MCF 10A (cell line): ENCODE measurements at regions of chr11 and their contacts with region 1.

Region 1: DNA sequence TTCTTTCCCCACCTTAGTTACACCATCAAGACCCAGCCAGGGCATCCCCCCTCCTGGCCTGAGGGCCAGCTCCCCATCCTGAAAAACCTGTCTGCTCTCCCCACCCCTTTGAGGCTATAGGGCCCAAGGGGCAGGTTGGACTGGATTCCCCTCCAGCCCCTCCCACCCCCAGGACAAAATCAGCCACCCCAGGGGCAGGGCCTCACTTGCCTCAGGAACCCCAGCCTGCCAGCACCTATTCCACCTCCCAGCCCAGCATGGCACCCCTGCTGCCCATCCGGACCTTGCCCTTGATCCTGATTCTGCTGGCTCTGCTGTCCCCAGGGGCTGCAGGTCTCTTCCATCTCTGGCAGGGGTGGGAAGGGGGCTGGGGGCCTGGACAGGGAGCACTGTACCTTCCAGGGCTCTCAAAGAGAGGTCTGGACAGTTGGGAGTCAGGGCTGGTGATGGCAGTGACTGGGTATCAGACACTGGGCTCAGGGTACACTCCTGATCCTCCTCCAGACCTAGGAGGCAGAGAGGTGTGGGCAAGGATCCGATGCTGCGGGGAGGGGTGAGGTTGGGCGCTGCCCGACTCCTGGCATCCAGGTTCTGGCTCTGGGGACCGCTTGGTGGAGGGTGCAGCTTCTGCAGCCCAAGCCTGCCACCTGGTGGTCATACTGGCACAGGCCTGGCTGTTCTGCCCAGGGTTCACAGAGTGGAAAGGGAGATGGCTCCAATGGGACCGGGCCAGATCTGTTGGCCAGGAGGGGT is at the start of gene UPK2:
- DNase-seq: peak; percentile 84
- H3K4me3 Mint-ChIP-seq: no peak within 1 kb of the TSS
- H3K27ac Mint-ChIP-seq: peak within 1 kb of the TSS; percentile 47
- H3K4me1 Mint-ChIP-seq: peaks cover 8% of the 10 kb centered on the region
- H3K27me3 Mint-ChIP-seq: peaks cover 12% of the 10 kb centered on the region
- CTCF ChIP-seq: peak; percentile 89
- total RNA-seq, gene UPK2: not detected in 2 replicates

Region 2: GRCh38 chr11:118610804-118611795 is 345.2 kb before region 1 on chr11:
- CTCF ChIA-PET with region 1: no interaction called
- POLR2A ChIA-PET with region 1: interaction called, 3 read pairs
- intact Hi-C with region 1: loop called (anchors 5 kb)
- DNase-seq: peak; percentile 58
- H3K4me3 Mint-ChIP-seq: no peak overlapping the region
- H3K27ac Mint-ChIP-seq: no peak overlapping the region
- H3K4me1 Mint-ChIP-seq: peaks cover 20% of the 10 kb centered on the region
- H3K27me3 Mint-ChIP-seq: no peaks in the 10 kb centered on the region
- CTCF ChIP-seq: peak; percentile 84

Region 3: GRCh38 chr11:118659314-118659952 is 296.8 kb before region 1 on chr11:
- CTCF ChIA-PET with region 1: interaction called, 4 read pairs
- POLR2A ChIA-PET with region 1: no interaction called
- intact Hi-C with region 1: loop called (anchors 1 kb)
- DNase-seq: peak; percentile 84
- H3K4me3 Mint-ChIP-seq: no peak overlapping the region
- H3K27ac Mint-ChIP-seq: no peak overlapping the region
- H3K4me1 Mint-ChIP-seq: no peaks in the 10 kb centered on the region
- H3K27me3 Mint-ChIP-seq: no peaks in the 10 kb centered on the region
- CTCF ChIP-seq: peak; percentile 96

Region 4: GRCh38 chr11:118856314-118856713 is 100.0 kb before region 1 on chr11:
- CTCF ChIA-PET with region 1: no interaction called
- POLR2A ChIA-PET with region 1: no interaction called
- intact Hi-C with region 1: no loop called
- DNase-seq: no peak
- H3K4me3 Mint-ChIP-seq: no peak overlapping the region
- H3K27ac Mint-ChIP-seq: no peak overlapping the region
- H3K4me1 Mint-ChIP-seq: no peaks in the 10 kb centered on the region
- H3K27me3 Mint-ChIP-seq: no peaks in the 10 kb centered on the region
- CTCF ChIP-seq: no peak

Region 5: GRCh38 chr11:118907051-118908042 is 48.9 kb before region 1 on chr11:
- CTCF ChIA-PET with region 1: interaction called, 5 read pairs
- POLR2A ChIA-PET with region 1: no interaction called
- intact Hi-C with region 1: loop called (anchors 1 kb)
- DNase-seq: peak; percentile 85
- H3K4me3 Mint-ChIP-seq: peak overlapping the region; percentile 33
- H3K27ac Mint-ChIP-seq: no peak overlapping the region
- H3K4me1 Mint-ChIP-seq: peaks cover 47% of the 10 kb centered on the region
- H3K27me3 Mint-ChIP-seq: no peaks in the 10 kb centered on the region
- CTCF ChIP-seq: peak; percentile 94

Region 6: DNA sequence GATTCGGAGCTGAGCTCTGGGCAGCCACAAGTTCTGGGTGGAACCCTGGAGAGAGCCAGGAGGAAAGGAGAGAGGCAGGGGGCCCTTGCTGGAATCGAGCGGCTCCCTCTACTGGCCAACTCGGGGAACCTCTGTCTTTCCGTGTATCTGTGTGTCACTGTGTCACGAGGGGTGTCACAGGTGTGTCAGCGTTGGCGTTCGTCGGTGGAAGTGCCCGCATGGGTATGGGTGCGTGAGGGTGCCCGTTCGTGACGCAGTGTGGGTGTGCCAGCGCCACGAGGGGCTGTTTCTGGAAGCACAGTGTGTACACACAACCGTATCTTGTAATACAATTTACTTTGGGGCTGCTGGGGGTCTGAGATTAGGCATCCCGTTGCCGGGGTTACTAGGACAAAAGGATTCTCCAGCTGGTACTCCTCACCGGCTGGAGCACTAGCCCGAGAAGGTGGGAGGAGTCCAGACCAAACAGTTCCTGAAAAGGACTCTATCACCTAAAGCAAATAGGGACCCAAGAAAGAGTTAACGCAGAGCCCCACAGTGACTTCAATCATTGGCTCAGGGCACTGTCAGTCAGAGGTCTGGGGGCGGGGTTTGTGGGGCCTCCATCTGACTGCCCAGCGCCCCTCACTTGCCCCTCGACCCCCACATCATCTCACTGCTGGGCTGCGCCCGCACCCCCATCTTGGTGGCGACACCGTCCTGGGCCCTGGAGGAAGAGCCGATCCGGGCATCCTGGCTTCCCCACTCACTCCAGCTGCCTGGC is 28.0 kb before region 1 on chr11:
- CTCF ChIA-PET with region 1: interaction called, 14 read pairs
- POLR2A ChIA-PET with region 1: interaction called, 4 read pairs
- intact Hi-C with region 1: loop called (anchors 2 kb)
- DNase-seq: peak; percentile 95
- H3K4me3 Mint-ChIP-seq: peak overlapping the region; percentile 84
- H3K27ac Mint-ChIP-seq: peak overlapping the region; percentile 84
- H3K4me1 Mint-ChIP-seq: peaks cover 31% of the 10 kb centered on the region
- H3K27me3 Mint-ChIP-seq: no peaks in the 10 kb centered on the region
- CTCF ChIP-seq: peak; percentile 77

Region 7: DNA sequence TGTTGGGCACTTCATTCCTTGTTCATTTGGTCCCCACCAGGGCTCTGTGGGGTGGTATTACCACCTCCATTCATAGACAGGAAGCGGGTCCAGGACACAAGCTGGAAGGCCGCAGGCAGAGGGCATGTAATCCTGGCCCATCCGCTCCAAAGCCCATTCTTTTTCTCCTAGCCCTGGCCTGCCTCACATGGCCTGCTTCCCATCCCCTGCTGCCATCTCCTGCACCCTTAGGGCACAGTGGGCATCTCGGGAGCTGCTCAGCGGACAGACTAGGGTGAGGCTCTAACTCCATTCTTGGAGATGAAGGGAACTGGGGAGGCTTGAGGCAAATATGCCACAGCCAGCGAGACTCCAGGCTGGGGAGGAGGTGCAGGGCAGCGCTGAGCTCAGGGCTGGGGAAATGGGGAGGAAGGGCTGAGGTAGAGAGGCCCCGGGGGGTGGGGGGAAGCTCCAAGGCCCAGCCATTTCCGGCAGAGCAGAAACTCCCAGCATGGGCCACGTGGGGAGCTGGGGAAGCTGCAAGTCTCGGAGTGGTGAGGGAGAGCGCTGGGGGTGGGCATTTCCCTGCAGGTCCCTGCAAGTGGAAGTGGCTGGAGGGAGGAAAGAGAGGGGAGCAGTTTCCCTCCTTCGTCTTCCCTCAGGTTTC is 16.2 kb before region 1 on chr11:
- CTCF ChIA-PET with region 1: interaction called, 18 read pairs
- POLR2A ChIA-PET with region 1: no interaction called
- intact Hi-C with region 1: no loop called
- DNase-seq: no peak
- H3K4me3 Mint-ChIP-seq: no peak overlapping the region
- H3K27ac Mint-ChIP-seq: no peak overlapping the region
- H3K4me1 Mint-ChIP-seq: peaks cover 6% of the 10 kb centered on the region
- H3K27me3 Mint-ChIP-seq: peaks cover 5% of the 10 kb centered on the region
- CTCF ChIP-seq: no peak